Calu3 (cell line): ENCODE measurements at regions of chr5 and their contacts with region 1.

Region 1: GRCh38 chr5:109695005-109695926 is 5.5 kb downstream of the MAN2A1 start:
- DNase-seq: no peak
- H3K4me3 Mint-ChIP-seq: no peak overlapping the region
- H3K27ac Mint-ChIP-seq: peak overlapping the region; percentile 32
- H3K4me1 Mint-ChIP-seq: peaks cover 55% of the 10 kb centered on the region
- H3K27me3 Mint-ChIP-seq: no peaks in the 10 kb centered on the region
- CTCF ChIP-seq: no peak

Region 2: DNA sequence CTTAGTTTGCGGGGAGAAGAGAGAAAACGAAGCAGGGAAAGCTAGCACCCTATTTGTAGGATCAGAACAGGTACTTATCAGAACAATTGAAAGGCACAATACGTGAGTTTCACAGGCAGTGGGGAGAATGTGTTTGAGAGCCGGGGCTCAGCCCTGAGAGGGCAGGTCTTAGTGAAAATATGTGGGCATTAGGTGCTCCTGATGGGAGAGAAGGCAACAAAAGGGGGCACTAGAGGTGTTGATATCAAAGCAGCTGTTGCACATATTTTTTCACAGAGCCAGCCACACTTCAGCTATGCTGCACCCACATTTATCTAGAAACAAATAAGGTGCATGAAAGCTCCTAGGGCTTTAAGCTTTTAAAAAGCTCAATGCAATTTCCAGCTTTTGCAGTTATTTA is 105.3 kb before region 1 on chr5:
- CTCF ChIA-PET with region 1: no interaction called
- intact Hi-C with region 1: no loop called
- DNase-seq: no peak
- H3K4me3 Mint-ChIP-seq: no peak overlapping the region
- H3K27ac Mint-ChIP-seq: no peak overlapping the region
- H3K4me1 Mint-ChIP-seq: no peaks in the 10 kb centered on the region
- H3K27me3 Mint-ChIP-seq: peaks cover 3% of the 10 kb centered on the region
- CTCF ChIP-seq: no peak

Region 3: DNA sequence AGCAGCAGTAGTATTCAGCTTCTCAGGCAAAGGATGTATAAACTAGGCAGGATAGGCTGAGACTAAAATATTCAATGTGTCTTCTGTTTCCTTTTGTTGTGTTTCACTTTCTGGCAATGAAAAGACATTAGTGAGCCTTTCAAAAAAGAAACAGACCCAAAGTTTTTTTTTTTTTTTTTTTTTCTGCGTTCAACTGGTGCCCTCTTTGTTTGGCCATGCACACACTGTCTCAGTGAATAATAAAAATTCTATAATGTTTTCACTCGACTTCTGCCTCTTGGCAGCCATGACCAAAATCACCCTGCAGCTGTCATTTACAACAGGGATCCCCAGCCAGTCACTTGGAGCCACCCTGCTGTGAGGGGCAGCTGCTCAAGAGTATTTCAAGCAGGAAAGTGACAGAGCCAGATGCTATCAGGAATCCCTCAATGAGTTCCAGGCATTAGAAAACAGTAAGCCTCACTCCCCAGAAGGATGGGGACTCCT is 49.5 kb before region 1 on chr5:
- CTCF ChIA-PET with region 1: no interaction called
- intact Hi-C with region 1: no loop called
- DNase-seq: no peak
- H3K4me3 Mint-ChIP-seq: no peak overlapping the region
- H3K27ac Mint-ChIP-seq: no peak overlapping the region
- H3K4me1 Mint-ChIP-seq: no peaks in the 10 kb centered on the region
- H3K27me3 Mint-ChIP-seq: no peaks in the 10 kb centered on the region
- CTCF ChIP-seq: no peak

Region 4: GRCh38 chr5:109759306-109759705 is 64.0 kb after region 1 on chr5:
- CTCF ChIA-PET with region 1: interaction called, 5 read pairs
- intact Hi-C with region 1: loop called (anchors 5 kb)
- DNase-seq: no peak
- H3K4me3 Mint-ChIP-seq: peak overlapping the region; percentile 19
- H3K27ac Mint-ChIP-seq: peak overlapping the region; percentile 52
- H3K4me1 Mint-ChIP-seq: peaks cover 18% of the 10 kb centered on the region
- H3K27me3 Mint-ChIP-seq: no peaks in the 10 kb centered on the region
- CTCF ChIP-seq: no peak

Region 5: DNA sequence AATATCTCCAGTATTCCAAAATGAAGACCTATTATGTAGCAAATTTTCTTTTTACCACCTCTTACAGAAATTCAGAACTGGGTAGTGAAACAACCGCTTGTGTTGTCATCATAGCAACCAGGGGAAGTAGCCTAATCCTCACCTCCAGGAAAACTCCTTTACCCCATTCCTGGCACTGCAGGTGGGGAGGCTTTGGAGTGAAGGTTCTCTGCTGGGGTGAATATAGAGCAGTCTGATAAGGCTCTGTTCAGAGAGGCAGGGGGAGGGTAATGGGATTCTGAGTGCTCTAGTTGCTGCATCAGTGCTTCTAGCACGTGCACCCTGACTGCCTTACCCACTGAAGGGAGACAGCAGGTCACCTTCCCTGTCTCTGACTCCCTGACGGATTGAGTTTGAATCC is 110.6 kb after region 1 on chr5:
- CTCF ChIA-PET with region 1: no interaction called
- intact Hi-C with region 1: loop called (anchors 2 kb)
- DNase-seq: peak; percentile 34
- H3K4me3 Mint-ChIP-seq: no peak overlapping the region
- H3K27ac Mint-ChIP-seq: peak overlapping the region; percentile 73
- H3K4me1 Mint-ChIP-seq: peaks cover 30% of the 10 kb centered on the region
- H3K27me3 Mint-ChIP-seq: no peaks in the 10 kb centered on the region
- CTCF ChIP-seq: no peak